Activated CD8-positive, alpha-beta memory T cell treated with anti-CD3 and anti-CD28 coated beads, Interleukin-2, amount 10 ng/mL, durations not matched to agents 7 days and 5 days (primary cell): ENCODE measurements at regions of chr12 and their contacts with region 1.

Region 1: DNA sequence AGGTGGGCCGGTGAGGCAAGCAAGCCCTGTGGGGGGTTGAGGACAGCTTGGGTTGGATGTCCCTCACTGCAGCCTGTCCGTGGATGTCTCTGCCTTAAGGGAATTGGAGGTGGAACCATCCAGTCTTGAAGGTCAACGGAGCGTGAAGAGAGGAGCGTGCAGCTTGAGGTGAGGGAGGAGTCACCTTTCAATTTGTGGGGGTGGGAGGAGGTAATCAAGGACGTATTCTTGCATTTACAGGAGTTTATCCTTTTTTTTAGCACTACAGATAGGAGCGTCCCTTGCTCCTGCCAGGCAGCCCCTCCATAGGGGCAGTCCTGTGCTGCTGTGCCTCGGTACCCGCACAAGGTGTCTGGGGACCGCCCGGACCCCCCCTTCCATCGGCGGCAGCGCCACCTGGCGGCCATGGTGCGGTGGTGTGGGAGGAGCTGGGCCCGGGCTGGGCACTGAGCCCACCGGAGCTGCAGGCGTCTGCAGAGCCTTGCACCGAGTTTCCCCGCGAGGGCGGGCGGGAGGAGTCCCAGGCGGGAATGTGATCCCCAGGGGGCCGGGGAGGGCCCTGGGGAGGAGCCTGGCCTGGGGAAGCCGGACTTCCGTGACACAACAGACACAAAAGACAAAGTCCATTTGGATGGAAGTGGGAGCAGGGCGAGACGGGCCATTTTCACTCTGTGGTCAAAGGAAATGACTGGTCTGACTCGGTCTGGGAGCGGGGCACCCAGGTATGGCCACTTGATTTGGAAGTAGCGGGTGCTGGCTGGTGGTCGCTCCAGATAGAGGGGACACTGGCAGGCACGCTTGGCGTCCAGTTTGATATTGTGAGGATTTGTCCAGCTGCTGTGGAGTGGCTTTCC is 923 bp downstream of the DNAJC22 start:
- DNase-seq: peak; percentile 78
- ATAC-seq: peak; percentile 83
- H3K4me3 Mint-ChIP-seq: peak overlapping the region; percentile 61
- H3K27ac Mint-ChIP-seq: no peak overlapping the region
- H3K4me1 Mint-ChIP-seq: peaks cover 30% of the 10 kb centered on the region
- H3K27me3 Mint-ChIP-seq: peaks cover 75% of the 10 kb centered on the region

Region 2: GRCh38 chr12:48995061-48995879 is 352.3 kb before region 1 on chr12:
- CTCF ChIA-PET with region 1: no interaction called
- DNase-seq: peak; percentile 65
- ATAC-seq: peak; percentile 44
- H3K4me3 Mint-ChIP-seq: no peak overlapping the region
- H3K27ac Mint-ChIP-seq: no peak overlapping the region
- H3K4me1 Mint-ChIP-seq: peaks cover 33% of the 10 kb centered on the region
- H3K27me3 Mint-ChIP-seq: peaks cover 60% of the 10 kb centered on the region

Region 3: DNA sequence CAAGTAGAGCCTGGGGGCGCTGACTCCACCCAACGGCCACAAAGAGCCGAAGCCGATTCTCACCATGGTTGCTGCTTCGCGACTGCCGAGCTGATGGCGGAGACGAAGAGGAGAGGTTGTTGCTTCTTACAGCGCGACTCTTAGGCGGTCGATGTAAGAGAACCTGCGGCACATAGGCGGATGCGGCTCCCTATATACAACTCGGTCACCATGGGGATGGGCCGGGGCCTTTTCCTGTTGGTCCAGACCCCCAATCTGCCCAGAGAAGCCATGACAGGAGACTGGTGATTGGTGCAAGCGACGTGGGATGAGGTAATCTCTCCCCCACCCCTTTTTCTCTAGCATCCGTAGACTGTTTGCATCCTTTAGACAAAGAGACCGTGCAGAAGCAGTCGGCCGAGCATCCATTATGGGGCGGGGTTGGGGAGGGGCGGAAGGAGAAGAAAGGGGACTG is 158.7 kb before region 1 on chr12 and contains the start of gene TUBA1A:
- CTCF ChIA-PET with region 1: no interaction called
- DNase-seq: peak; percentile 99
- ATAC-seq: peak; percentile 88
- H3K4me3 Mint-ChIP-seq: peak within 1 kb of the TSS; percentile 95
- H3K27ac Mint-ChIP-seq: peak within 1 kb of the TSS; percentile 99
- H3K4me1 Mint-ChIP-seq: peaks cover 21% of the 10 kb centered on the region
- H3K27me3 Mint-ChIP-seq: peaks cover 2% of the 10 kb centered on the region
- total RNA-seq, gene TUBA1A: 91.0 to 96.5 TPM

Region 4: GRCh38 chr12:49288412-49288853 is 59.2 kb before region 1 on chr12:
- CTCF ChIA-PET with region 1: interaction called, 87 read pairs
- DNase-seq: peak; percentile 84
- ATAC-seq: peak; percentile 70
- H3K4me3 Mint-ChIP-seq: no peak overlapping the region
- H3K27ac Mint-ChIP-seq: no peak overlapping the region
- H3K4me1 Mint-ChIP-seq: peaks cover 3% of the 10 kb centered on the region
- H3K27me3 Mint-ChIP-seq: peaks cover 41% of the 10 kb centered on the region

Region 5: DNA sequence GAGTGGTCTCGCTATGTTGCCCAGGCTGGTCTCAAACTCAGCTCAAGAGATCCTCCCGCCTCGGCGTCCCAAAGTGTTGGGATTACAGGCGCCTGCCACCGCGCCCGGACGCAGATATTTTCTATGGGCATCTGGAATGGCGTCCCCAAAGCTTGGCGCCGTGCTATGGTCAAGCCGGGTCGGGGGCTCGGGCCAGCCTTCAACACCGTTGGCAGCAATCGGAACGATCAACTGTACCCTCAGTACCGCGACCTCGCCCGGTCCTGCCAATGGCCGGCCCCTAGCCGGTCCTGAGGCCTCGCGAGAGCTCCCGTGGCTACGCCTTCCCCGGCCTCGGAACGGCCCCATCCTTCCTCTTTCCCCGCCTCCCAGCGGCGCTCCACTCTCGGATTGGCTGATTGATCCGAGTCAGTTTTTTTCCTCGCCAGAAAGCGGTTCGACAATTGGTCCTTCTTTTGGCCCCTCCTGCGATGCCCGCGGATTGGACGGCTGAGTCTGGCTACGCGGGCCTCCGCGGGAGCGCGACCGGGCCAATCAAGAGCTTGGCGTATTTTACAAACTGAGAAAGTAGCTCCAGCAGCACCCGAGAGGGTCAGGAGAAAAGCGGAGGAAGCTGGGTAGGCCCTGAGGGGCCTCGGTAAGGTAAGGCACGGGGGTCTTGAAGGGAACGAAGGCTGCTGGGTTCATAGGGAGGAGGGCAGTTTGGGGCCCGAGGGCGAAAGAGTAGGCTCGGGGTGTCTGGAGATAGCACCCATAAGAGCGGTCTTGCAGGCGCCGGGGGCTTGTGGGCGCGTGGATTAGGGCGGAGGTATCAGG is 24.7 kb before region 1 on chr12 and contains the start of gene TROAP:
- CTCF ChIA-PET with region 1: interaction called, 36 read pairs
- DNase-seq: peak; percentile 99
- ATAC-seq: peak; percentile 98
- H3K4me3 Mint-ChIP-seq: peak within 1 kb of the TSS; percentile 97
- H3K27ac Mint-ChIP-seq: peak within 1 kb of the TSS; percentile 98
- H3K4me1 Mint-ChIP-seq: peaks cover 28% of the 10 kb centered on the region
- H3K27me3 Mint-ChIP-seq: no peaks in the 10 kb centered on the region
- total RNA-seq, gene TROAP: 89.5 to 107 TPM

Region 6: GRCh38 chr12:49336645-49337584 is 10.7 kb before region 1 on chr12 and contains the start of gene C1QL4:
- CTCF ChIA-PET with region 1: interaction called, 85 read pairs
- DNase-seq: peak; percentile 87
- ATAC-seq: peak; percentile 92
- H3K4me3 Mint-ChIP-seq: peak within 1 kb of the TSS; percentile 40
- H3K27ac Mint-ChIP-seq: no peak within 1 kb of the TSS
- H3K4me1 Mint-ChIP-seq: peaks cover 17% of the 10 kb centered on the region
- H3K27me3 Mint-ChIP-seq: peaks cover 80% of the 10 kb centered on the region
- total RNA-seq, gene C1QL4: not detected

Region 7: DNA sequence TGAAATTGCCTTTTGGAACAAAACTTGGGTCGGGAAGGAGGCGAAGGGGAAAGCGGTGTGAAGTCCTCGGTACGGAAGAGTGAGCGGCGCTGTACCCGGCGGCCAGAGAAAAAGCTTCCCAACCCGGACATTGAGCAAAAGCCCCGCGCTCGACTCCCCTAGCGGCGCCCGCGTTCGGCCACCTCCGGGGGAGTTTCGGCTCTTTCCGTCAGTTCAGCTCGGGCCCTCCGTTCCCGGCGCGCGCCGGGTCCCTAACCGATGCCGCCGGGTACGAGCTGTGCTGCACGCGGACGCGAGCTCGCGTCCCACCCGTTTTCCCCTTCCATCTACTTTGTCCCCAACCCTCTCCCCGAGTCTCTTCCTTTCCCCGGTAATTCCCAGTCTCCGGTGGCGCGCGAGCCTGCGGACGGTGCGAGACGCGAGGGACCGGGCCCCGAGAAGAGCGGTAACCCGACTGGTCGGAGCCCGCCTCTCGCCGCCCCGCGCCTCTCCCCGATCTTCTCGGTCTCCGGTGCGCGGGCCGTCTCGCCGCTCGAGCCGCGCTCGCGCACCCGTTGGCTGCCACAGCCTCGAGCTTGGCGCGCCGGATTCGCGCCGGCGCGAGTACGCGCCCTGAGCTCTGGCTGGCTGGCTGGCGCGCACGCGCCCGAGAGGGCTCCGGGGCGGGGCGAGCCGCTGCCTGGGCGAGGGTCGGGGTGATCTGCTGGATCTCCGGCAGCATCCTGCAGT is 19.2 kb after region 1 on chr12:
- CTCF ChIA-PET with region 1: interaction called, 33 read pairs
- DNase-seq: peak; percentile 94
- ATAC-seq: peak; percentile 88
- H3K4me3 Mint-ChIP-seq: peak overlapping the region; percentile 95
- H3K27ac Mint-ChIP-seq: peak overlapping the region; percentile 98
- H3K4me1 Mint-ChIP-seq: peaks cover 35% of the 10 kb centered on the region
- H3K27me3 Mint-ChIP-seq: no peaks in the 10 kb centered on the region

Region 8: DNA sequence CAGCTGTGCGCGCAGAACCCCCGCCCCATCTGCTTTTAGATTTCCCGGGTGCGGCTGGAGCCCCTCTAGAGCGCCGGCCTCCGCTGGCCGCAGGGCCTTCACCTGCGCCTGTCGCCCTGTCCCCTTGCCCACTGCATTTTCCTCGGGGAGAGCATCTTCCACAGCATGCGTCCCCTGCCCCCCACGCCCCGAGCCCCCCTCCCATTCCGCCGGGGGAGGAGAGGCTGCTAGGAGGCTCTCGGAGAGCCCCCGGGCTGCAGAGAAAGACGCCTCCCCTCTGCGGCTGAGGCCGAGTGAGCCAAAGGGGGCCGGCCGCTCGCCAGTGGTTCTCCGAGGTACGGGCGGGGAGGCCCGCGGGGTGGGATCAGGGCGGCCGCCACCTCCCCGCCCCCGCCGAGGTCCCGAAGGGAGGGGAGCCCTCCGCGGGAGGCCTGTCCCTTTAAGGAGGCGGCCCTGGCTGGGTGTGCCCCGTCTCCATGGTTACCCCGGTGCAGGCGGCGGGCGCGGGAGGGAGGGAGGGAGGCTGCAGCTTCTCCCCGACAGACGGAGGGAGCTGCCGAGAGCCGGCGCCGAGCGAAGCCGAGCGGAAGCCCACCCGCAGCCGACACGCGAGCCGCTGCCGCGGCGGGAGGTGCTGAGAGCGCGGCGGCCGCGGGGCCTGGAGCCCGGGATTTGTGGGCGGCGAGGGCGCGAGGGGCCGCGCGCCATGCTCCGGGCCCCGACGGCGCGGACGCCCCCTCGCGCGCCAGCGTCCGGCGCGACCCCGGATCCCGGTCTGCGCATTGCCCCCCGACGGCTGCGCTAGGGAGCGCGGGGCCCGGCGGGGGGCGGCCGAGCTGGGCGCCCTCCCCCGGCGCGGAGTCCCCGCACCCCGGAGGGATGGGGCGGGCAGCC is 191.1 kb after region 1 on chr12 and contains the start of gene KCNH3:
- CTCF ChIA-PET with region 1: interaction called, 16 read pairs
- DNase-seq: peak; percentile 95
- ATAC-seq: peak; percentile 92
- H3K4me3 Mint-ChIP-seq: peak within 1 kb of the TSS; percentile 49
- H3K27ac Mint-ChIP-seq: no peak within 1 kb of the TSS
- H3K4me1 Mint-ChIP-seq: peaks cover 14% of the 10 kb centered on the region
- H3K27me3 Mint-ChIP-seq: peaks cover 53% of the 10 kb centered on the region
- total RNA-seq, gene KCNH3: 1.1 to 1.2 TPM

Region 9: GRCh38 chr12:49636979-49637755 is 289.6 kb after region 1 on chr12:
- CTCF ChIA-PET with region 1: no interaction called
- DNase-seq: peak; percentile 79
- ATAC-seq: peak; percentile 91
- H3K4me3 Mint-ChIP-seq: no peak overlapping the region
- H3K27ac Mint-ChIP-seq: no peak overlapping the region
- H3K4me1 Mint-ChIP-seq: peaks cover 19% of the 10 kb centered on the region
- H3K27me3 Mint-ChIP-seq: no peaks in the 10 kb centered on the region